IMR-90 (cell line): ENCODE measurements at regions of chr1 and their contacts with region 1.

Region 1: DNA sequence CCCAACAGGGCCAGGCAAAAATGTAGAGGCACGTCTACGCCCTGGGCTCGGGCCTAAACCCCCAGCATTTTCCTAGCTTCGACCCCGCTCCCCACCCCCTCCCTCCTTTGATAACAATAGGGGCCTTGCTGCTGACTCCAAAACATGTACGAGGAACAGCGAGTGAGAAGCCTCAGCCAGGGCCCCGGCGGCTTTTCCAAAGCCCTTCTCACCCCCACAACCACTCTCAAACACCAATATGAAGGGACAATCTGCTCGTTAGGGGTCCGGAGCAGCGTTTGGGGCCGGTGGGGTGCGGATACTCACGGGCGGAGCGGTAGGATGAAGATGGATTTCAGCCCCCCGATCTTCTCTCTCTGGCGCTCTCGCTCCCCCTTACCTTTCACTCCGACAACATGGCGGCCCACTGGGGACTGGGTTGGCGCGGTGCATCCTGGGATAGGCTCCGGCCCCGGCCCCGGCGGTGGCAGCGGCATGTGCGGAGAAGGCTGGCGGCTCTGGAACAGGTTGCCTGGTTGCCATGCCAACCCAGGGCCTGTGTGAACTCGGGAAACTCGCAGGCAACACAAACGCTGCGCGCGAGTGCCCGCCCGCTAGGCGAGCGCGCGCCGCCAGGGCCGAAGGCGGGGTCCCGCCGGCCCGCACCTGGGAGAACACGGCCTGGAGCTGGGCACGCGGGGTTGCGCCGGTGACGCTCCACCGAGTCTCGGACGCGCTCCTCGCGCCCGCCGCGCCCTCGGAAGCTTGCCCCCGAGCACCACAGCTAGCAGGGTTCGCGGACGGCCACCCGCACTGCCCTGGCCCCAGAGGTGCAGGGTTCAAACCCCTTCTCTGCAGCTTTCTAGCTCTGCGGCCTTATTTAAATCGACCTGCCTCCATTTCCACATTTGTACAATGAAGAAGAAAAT is at the start of gene PUM1:
- DNase-seq: peak; percentile 96
- ATAC-seq: peak; percentile 98
- H3K4me3 ChIP-seq: peak within 1 kb of the TSS; percentile 96
- H3K27ac ChIP-seq: peak within 1 kb of the TSS; percentile 90
- H3K4me1 ChIP-seq: peaks cover 4% of the 10 kb centered on the region; the same call in 1 of the 2 replicates
- H3K27me3 ChIP-seq: no peaks in the 10 kb centered on the region
- CTCF ChIP-seq: no peak
- POLR2A ChIP-seq: peak; percentile 95
- RAD21 ChIP-seq: no peak; the same call in 1 of the 2 replicates
- total RNA-seq, gene PUM1: 71.9 and 137 TPM in 2 replicates

Region 2: GRCh38 chr1:30942326-30942963 is 123.1 kb before region 1 on chr1:
- CTCF ChIA-PET with region 1: no interaction called
- POLR2A ChIA-PET with region 1: no interaction called
- dilution Hi-C with region 1: no loop called
- in situ Hi-C with region 1: no loop called
- intact Hi-C with region 1: loop called (anchors 5 kb)
- DNase-seq: no peak
- ATAC-seq: no peak; the same call in 1 of the 2 replicates
- H3K4me3 ChIP-seq: no peak overlapping the region
- H3K27ac ChIP-seq: no peak overlapping the region
- H3K4me1 ChIP-seq: no peaks in the 10 kb centered on the region; the same call in 1 of the 2 replicates
- H3K27me3 ChIP-seq: no peaks in the 10 kb centered on the region
- CTCF ChIP-seq: no peak
- POLR2A ChIP-seq: no peak
- RAD21 ChIP-seq: no peak

Region 3: GRCh38 chr1:30982937-30983336 is 82.6 kb before region 1 on chr1:
- CTCF ChIA-PET with region 1: no interaction called
- POLR2A ChIA-PET with region 1: no interaction called
- dilution Hi-C with region 1: no loop called
- in situ Hi-C with region 1: no loop called
- intact Hi-C with region 1: loop called (anchors 2 kb)
- DNase-seq: peak; percentile 52
- ATAC-seq: peak; percentile 71
- H3K4me3 ChIP-seq: no peak overlapping the region
- H3K27ac ChIP-seq: no peak overlapping the region
- H3K4me1 ChIP-seq: peaks cover 8% of the 10 kb centered on the region
- H3K27me3 ChIP-seq: no peaks in the 10 kb centered on the region
- CTCF ChIP-seq: peak; percentile 31; the same call in 1 of the 2 replicates
- POLR2A ChIP-seq: no peak
- RAD21 ChIP-seq: no peak

Region 4: DNA sequence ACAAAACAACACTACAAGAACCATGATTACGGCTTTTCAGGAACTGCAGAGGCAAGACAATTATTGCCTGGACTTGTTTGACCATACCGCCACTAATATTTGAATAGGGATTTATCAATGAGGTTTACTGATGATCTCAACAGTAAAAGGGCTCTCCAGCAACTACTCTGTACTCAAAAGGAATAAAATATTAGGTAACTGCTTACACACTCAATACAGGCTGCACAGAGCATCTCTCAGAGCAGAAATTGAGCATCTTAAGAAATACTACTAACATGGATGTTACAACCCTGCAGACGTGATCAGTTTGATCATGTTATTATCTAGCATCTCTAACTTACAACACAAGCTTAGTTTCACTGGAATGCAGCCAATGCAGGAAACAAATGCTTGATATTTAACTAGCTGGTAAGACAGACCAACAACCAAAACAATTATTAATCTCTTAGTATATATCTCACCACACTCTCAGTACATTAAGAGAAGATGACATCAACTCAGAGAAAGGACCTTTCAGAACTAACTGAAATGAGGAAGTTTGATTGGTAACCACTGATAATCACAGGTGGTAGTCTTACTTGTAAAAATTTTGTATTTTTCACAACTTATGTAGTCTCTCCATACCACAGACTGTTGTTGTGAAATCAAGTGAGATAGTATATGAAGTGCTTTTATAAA is 52.2 kb before region 1 on chr1:
- CTCF ChIA-PET with region 1: no interaction called
- POLR2A ChIA-PET with region 1: no interaction called
- dilution Hi-C with region 1: no loop called
- in situ Hi-C with region 1: no loop called
- intact Hi-C with region 1: no loop called
- DNase-seq: peak; percentile 42
- ATAC-seq: peak; percentile 16; the same call in 1 of the 2 replicates
- H3K4me3 ChIP-seq: no peak overlapping the region
- H3K27ac ChIP-seq: no peak overlapping the region
- H3K4me1 ChIP-seq: peaks cover 19% of the 10 kb centered on the region
- H3K27me3 ChIP-seq: no peaks in the 10 kb centered on the region
- CTCF ChIP-seq: no peak
- POLR2A ChIP-seq: no peak
- RAD21 ChIP-seq: no peak

Region 5: GRCh38 chr1:31155216-31155841 is 89.8 kb after region 1 on chr1:
- CTCF ChIA-PET with region 1: no interaction called
- POLR2A ChIA-PET with region 1: no interaction called
- dilution Hi-C with region 1: no loop called
- in situ Hi-C with region 1: no loop called
- intact Hi-C with region 1: loop called (anchors 2 kb)
- DNase-seq: peak; percentile 32
- ATAC-seq: peak; percentile 80
- H3K4me3 ChIP-seq: peak overlapping the region; percentile 71
- H3K27ac ChIP-seq: peak overlapping the region; percentile 71
- H3K4me1 ChIP-seq: peaks cover 6% of the 10 kb centered on the region
- H3K27me3 ChIP-seq: no peaks in the 10 kb centered on the region
- CTCF ChIP-seq: peak; percentile 28; the same call in 1 of the 2 replicates
- POLR2A ChIP-seq: peak; percentile 36; the same call in 1 of the 2 replicates
- RAD21 ChIP-seq: no peak